Heart left ventricle (tissue), 16 donors: ENCODE measurements at regions of chr5 and their contacts with region 1.

Region 1: DNA sequence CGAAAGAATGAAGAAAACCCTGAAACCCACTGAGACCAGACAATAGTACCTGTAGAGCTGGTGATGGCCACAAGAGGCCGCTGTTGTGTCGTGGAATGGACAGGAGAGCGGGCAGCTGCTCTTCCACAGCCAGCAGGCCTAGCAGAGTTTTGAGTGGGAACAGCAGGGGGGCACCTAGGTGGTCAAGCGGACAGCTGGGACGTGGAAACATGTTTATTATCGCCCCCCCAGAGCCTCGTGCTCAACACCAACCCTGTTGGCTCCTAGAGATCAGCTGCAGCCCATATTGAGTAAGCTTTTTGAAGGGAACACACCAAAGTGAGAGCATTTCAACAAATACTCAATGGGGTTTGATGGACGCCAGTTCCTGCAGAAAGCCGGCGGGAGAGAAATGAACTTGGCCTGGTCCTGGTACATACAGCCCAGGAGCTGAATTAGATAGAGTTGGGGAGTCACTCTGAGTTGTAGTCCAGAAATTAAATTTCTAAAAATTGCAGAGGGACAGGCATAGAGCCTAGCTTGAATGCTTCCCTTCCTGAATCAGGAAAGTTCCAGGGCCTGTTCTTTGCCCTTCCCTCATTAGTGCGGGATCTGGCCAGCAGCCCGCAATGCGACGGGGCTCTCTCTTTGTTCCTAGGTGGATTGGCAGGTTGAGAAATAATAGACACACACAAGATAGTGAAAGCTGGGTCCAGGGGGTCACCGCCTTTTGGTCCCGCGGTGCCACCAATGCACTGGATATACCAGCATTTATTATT is 33.8 kb downstream of the MFAP3 start:
- DNase-seq: peak; percentile 72 to 91 (median 83)
- ATAC-seq: peak; percentile 78 to 94 (median 90)
- H3K4me3 ChIP-seq: no peak overlapping the region
- H3K27ac ChIP-seq: peak overlapping the region in 2 of 12 donors; percentile 1 to 27
- H3K4me1 ChIP-seq: peaks cover 0 to 27% (median 11%) of the 10 kb centered on the region in 12 donors
- H3K27me3 ChIP-seq: no peaks in the 10 kb centered on the region
- CTCF ChIP-seq: peak; percentile 88 to 98 (median 95)
- POLR2A ChIP-seq: no peak

Region 2: GRCh38 chr5:154179846-154180710 is 107.5 kb after region 1 on chr5:
- intact Hi-C with region 1: loop called (anchors 1 to 5 kb)
- DNase-seq: peak in 1 of 5 donors; percentile 41
- ATAC-seq: peak in 3 of 4 donors; percentile 84 to 88 (median 88)
- H3K4me3 ChIP-seq: no peak overlapping the region
- H3K27ac ChIP-seq: no peak overlapping the region
- H3K4me1 ChIP-seq: peaks cover 0 to 12% (median 0%) of the 10 kb centered on the region in 12 donors
- H3K27me3 ChIP-seq: no peaks in the 10 kb centered on the region
- CTCF ChIP-seq: peak; percentile 68 to 87 (median 76)
- POLR2A ChIP-seq: no peak